H1 (cell line): ENCODE measurements at regions of chrX and their contacts with region 1.

Region 1: DNA sequence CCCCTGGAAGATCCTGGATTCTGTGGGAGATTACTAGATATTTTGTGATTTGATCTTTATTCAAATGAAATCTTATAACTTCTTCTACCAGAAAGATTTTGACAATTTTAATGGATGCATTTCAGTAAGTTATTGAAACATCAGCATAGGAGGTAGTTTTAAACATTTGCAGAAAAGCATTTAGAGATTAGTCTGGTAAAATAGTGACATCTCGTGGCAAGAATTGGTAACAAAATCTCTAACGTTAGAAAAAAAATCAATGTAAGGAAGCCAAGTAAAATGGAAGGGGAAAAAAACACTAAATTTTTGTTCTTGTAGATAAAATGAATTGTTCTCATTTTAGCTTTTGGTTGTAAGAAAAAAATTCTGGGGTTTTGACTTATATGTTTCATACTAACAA is 73.3 kb downstream of the TASL start:
- DNase-seq: no peak
- H3K4me3 ChIP-seq: no peak overlapping the region
- H3K27ac ChIP-seq: no peak overlapping the region
- H3K4me1 ChIP-seq: no peaks in the 10 kb centered on the region; a peak in 1 of 7 replicates
- H3K27me3 ChIP-seq: no peaks in the 10 kb centered on the region
- CTCF ChIP-seq: peak in 1 of 3 experiments; percentile 5; a peak in 1 of 4 replicates
- EP300 ChIP-seq: no peak
- POLR2A ChIP-seq: no peak
- RAD21 ChIP-seq: peak in 1 of 2 experiments; percentile 54; a peak in 3 of 4 replicates

Region 2: GRCh38 chrX:30141966-30142365 is 362.3 kb before region 1 on chrX:
- CTCF ChIA-PET with region 1: interaction called, 10 read pairs
- POLR2A ChIA-PET with region 1: no interaction called
- DNase-seq: no peak
- H3K4me3 ChIP-seq: no peak overlapping the region
- H3K27ac ChIP-seq: no peak overlapping the region
- H3K4me1 ChIP-seq: no peaks in the 10 kb centered on the region
- H3K27me3 ChIP-seq: no peaks in the 10 kb centered on the region
- CTCF ChIP-seq: peak in 2 of 3 experiments; percentile 28 to 46; a peak in 2 of 4 replicates
- EP300 ChIP-seq: no peak
- POLR2A ChIP-seq: no peak
- RAD21 ChIP-seq: peak; percentile 70 to 71

Region 3: GRCh38 chrX:30488092-30488491 is 16.2 kb before region 1 on chrX:
- CTCF ChIA-PET with region 1: interaction called, 11 read pairs
- POLR2A ChIA-PET with region 1: no interaction called
- DNase-seq: no peak
- H3K4me3 ChIP-seq: no peak overlapping the region
- H3K27ac ChIP-seq: no peak overlapping the region
- H3K4me1 ChIP-seq: no peaks in the 10 kb centered on the region
- H3K27me3 ChIP-seq: no peaks in the 10 kb centered on the region
- CTCF ChIP-seq: peak in 1 of 3 experiments; percentile 20; a peak in 1 of 4 replicates
- EP300 ChIP-seq: no peak
- POLR2A ChIP-seq: no peak
- RAD21 ChIP-seq: peak; percentile 47 to 50